PC-9 (cell line): ENCODE measurements at regions of chrX and their contacts with region 1.

Region 1: GRCh38 chrX:31423609-31424189 is 351.9 kb upstream of the FTHL17 start:
- DNase-seq: peak; percentile 15 to 40
- H3K4me3 ChIP-seq: no peak overlapping the region
- H3K27ac ChIP-seq: no peak overlapping the region
- H3K4me1 ChIP-seq: no peaks in the 10 kb centered on the region
- H3K27me3 ChIP-seq: no peaks in the 10 kb centered on the region
- CTCF ChIP-seq: peak; percentile 57

Region 2: GRCh38 chrX:30822068-30822681 is 601.5 kb before region 1 on chrX:
- CTCF ChIA-PET with region 1: no interaction called
- POLR2A ChIA-PET with region 1: no interaction called
- intact Hi-C with region 1: loop called (anchors 10 kb)
- DNase-seq: no peak
- H3K4me3 ChIP-seq: no peak overlapping the region
- H3K27ac ChIP-seq: no peak overlapping the region
- H3K4me1 ChIP-seq: no peaks in the 10 kb centered on the region
- H3K27me3 ChIP-seq: no peaks in the 10 kb centered on the region
- CTCF ChIP-seq: no peak; the same call in 1 of the 2 replicates

Region 3: GRCh38 chrX:31223817-31224216 is 199.9 kb before region 1 on chrX:
- CTCF ChIA-PET with region 1: no interaction called
- POLR2A ChIA-PET with region 1: no interaction called
- intact Hi-C with region 1: loop called (anchors 10 kb)
- DNase-seq: no peak
- H3K4me3 ChIP-seq: no peak overlapping the region
- H3K27ac ChIP-seq: no peak overlapping the region
- H3K4me1 ChIP-seq: peaks cover 8% of the 10 kb centered on the region; the same call in 1 of the 2 replicates
- H3K27me3 ChIP-seq: no peaks in the 10 kb centered on the region
- CTCF ChIP-seq: no peak

Region 4: DNA sequence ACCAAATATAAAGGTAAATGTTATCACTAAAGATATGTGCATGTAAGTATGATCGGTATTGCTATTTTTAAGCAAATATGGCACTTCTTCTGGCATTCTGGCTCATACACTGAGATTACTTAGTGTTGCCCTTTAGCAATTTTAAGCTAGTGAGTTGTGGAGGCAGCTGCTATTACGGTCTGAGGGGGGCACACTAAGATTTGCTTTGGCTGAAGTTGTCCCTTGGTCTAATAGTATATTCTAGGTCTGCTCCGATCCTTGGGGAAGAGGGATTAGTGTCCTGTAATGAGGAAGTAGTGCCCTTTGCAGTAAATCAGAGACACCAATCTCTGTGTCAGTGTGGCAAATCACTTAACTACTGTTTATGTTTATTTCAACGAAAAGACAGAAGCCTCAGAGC is 155.3 kb before region 1 on chrX:
- CTCF ChIA-PET with region 1: no interaction called
- POLR2A ChIA-PET with region 1: no interaction called
- intact Hi-C with region 1: loop called (anchors 2 kb)
- DNase-seq: no peak
- H3K4me3 ChIP-seq: no peak overlapping the region
- H3K27ac ChIP-seq: no peak overlapping the region
- H3K4me1 ChIP-seq: no peaks in the 10 kb centered on the region
- H3K27me3 ChIP-seq: no peaks in the 10 kb centered on the region
- CTCF ChIP-seq: no peak